HCT116 (cell line): ENCODE measurements at regions of chr10 and their contacts with region 1.

Region 1: DNA sequence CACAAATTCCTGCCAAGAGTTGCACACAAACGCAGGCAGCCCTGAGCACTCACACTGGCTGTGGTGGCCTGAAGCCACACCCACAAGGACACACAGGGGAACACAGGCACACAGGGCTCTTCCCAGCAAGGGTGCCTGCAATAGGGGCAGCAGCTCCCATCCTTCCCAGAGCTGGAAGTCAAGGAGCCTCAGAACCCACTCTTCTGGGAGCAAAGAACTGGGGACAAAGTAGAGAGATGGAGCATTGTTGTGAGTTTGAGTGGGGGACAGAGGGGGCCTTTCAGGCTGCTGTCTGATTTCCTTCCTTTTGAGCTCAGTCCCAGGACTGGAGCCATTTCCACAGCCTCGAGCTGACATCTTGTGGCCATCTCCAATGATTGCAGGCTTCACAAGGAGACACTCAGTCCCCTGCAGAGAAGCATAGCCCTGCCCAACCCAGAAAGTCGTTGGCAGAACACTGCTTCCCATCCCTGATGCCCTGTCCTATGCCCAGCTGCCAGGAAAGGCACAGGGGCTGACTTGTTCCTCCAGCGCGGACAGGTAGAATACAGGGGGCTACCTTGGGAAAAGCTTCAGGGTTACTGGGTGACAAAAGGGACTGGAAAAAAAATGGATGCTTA is 34.4 kb upstream of the SLF2 start:
- DNase-seq: peak; percentile 82
- ATAC-seq: peak; percentile 96
- H3K4me3 ChIP-seq: no peak overlapping the region
- H3K27ac ChIP-seq: no peak overlapping the region
- H3K4me1 ChIP-seq: peaks cover 8 to 27% of the 10 kb centered on the region in 2 experiments
- H3K27me3 ChIP-seq: no peaks in the 10 kb centered on the region
- CTCF ChIP-seq: peak; percentile 90 to 98 (median 92)
- POLR2A ChIP-seq: no peak
- RAD21 ChIP-seq: peak; percentile 99

Region 2: DNA sequence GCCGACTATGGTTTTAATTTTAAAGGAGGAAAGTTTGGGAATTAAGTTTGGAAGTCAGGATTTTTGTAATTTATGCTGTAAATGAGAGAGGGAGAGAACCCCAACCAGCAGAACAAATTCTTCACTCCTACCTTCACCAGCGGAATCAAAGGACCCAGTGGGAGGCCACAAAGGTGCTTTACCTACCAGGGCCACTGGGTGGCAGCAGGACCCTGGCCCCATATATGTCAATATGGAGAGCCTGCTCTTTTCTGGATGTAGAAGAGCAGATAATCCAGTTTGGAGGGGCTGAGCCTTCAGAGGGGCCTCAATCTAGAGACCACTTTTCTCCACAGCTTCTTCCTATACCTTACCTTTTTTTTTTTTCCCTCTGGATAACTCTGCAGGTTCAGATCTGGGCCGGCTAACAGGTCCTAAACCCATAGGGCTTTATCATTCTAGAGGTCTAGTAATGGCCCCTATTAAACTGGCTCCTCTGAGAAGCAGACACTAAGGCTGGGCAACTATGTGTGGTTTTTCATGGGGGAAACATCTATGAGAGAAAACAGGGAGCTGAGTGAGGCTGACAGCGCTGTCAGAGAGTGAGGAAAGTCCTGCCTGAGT is 539.9 kb before region 1 on chr10:
- CTCF ChIA-PET with region 1: interaction called, 21 read pairs
- POLR2A ChIA-PET with region 1: no interaction called
- RAD21 ChIA-PET with region 1: no interaction called
- intact Hi-C with region 1: loop called (anchors 1 kb)
- DNase-seq: peak; percentile 56
- ATAC-seq: peak; percentile 74
- H3K4me3 ChIP-seq: no peak overlapping the region
- H3K27ac ChIP-seq: no peak overlapping the region; the same call in 1 of the 2 replicates
- H3K4me1 ChIP-seq: peaks cover 3 to 10% of the 10 kb centered on the region in 2 experiments; a peak in 3 of 4 replicates
- H3K27me3 ChIP-seq: 0 out of 2 replicates have a peak, but pooled peaks cover 3% of the 10 kb centered on the region
- CTCF ChIP-seq: peak in 2 of 3 experiments; percentile 99; a peak in 4 of 6 replicates
- POLR2A ChIP-seq: no peak
- RAD21 ChIP-seq: no peak

Region 3: DNA sequence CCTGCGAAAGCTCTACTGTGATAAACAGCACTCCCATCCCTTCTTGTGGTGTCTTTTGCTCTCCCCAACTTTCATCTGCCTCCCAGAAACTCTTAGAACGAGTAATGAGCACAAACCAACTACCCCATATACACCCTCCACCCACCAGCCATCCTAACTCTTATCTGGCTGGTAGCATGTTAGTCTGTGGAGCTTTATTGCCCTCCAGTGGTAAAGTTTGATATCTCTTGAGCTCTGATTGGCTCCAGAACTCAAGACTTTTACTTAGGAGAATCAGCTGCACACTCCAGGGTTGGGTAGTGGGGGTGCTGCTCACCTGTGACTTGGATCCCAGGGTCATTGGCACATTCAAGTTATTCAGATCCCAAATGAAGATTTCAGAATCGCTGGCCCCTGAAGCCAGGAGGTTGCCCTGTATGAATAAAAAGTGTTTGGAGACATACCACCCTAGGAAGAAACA is 369.7 kb before region 1 on chr10:
- CTCF ChIA-PET with region 1: interaction called, 16 read pairs
- POLR2A ChIA-PET with region 1: no interaction called
- RAD21 ChIA-PET with region 1: interaction called, 3 to 4 read pairs
- intact Hi-C with region 1: loop called (anchors 2 kb)
- DNase-seq: peak; percentile 46
- ATAC-seq: peak; percentile 96
- H3K4me3 ChIP-seq: no peak overlapping the region
- H3K27ac ChIP-seq: no peak overlapping the region
- H3K4me1 ChIP-seq: peaks cover 0 to 4% of the 10 kb centered on the region in 2 experiments; a peak in 1 of 4 replicates
- H3K27me3 ChIP-seq: no peaks in the 10 kb centered on the region
- CTCF ChIP-seq: peak; percentile 76 to 92 (median 91)
- POLR2A ChIP-seq: no peak
- RAD21 ChIP-seq: peak; percentile 92

Region 4: DNA sequence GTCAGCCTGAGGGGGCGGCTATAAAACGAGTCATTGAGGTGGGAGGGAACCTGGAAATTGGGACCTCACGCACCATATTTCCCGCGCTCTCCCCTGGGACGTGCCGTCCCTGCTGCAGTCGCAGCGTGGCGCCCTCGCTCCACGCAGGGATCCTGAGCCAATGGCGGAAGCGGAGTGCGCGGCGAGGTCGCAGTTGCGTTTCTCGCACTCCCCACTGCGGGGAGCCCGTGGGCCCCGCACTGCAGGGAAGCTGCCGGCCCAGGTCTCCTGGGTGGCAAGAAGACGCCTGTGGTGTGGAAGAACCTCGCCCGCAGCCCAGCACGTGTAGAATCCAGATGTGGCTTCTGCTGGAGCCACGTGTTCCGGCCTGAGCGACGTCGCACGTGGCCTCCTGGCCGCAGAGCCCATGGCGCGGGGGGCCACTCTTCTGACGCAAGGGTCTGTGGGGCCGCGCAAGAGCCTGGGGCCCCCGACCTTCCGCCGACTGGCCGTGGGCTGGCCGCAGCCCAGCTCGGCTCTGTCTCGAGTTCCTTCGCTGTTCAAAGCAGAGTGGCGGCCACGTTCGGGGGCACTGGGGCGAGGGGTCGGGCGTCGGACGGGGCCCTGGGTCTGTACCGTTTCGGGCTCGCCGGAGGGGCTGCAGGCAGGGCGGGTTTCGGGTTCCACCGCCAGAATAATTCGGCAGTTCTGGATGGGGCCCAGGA is 316.2 kb before region 1 on chr10:
- CTCF ChIA-PET with region 1: interaction called, 182 read pairs
- POLR2A ChIA-PET with region 1: interaction called, 10 read pairs
- RAD21 ChIA-PET with region 1: interaction called, 22 to 36 read pairs
- intact Hi-C with region 1: loop called (anchors 1 kb)
- DNase-seq: peak; percentile 74
- ATAC-seq: peak; percentile 95
- H3K4me3 ChIP-seq: no peak overlapping the region
- H3K27ac ChIP-seq: no peak overlapping the region
- H3K4me1 ChIP-seq: peaks cover 0 to 10% of the 10 kb centered on the region in 2 experiments; a peak in 2 of 4 replicates
- H3K27me3 ChIP-seq: no peaks in the 10 kb centered on the region
- CTCF ChIP-seq: peak; percentile 99 to 100 (median 100)
- POLR2A ChIP-seq: no peak
- RAD21 ChIP-seq: peak; percentile 100

Region 5: DNA sequence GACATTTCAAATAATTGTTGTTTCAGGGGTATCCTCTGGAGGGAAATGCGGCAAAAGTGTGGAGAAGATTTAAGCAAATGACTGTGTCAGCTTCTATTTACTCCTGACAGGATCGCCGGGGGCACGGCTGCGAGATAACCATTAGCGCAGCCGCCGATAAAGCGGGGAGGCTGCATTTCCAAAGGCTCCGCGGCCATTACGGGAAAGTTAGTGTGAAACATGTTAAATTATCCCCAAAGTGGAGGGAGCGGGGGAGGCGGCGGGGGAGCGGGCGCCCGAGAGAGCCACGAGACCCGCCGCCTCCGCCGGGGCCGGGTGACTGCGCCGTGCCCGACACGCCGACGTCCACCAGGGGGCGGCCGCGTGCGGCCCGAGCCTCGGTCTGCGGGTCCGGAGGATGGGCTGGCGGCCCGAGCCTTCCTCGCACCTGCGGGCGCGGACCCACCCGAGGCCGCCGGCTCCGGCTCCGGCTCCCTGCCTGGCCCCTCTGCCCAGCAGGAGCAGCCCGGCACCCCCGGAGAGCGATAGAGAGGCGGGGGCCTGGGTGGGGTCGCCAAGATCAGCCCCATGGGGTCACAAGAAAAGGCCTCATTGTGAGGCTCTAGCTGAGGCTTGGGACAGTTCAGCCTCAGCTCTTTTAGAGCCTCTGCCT is 207.4 kb before region 1 on chr10:
- CTCF ChIA-PET with region 1: interaction called, 12 read pairs
- POLR2A ChIA-PET with region 1: interaction called, 3 read pairs
- RAD21 ChIA-PET with region 1: interaction called in 1 of 2 experiments, 10 read pairs
- intact Hi-C with region 1: loop called (anchors 1 kb)
- DNase-seq: no peak
- ATAC-seq: peak; percentile 95
- H3K4me3 ChIP-seq: peak overlapping the region; percentile 39 to 56
- H3K27ac ChIP-seq: no peak overlapping the region
- H3K4me1 ChIP-seq: peaks cover 6 to 10% of the 10 kb centered on the region in 2 experiments
- H3K27me3 ChIP-seq: peaks cover 22% of the 10 kb centered on the region
- CTCF ChIP-seq: peak; percentile 56 to 92 (median 83); a peak in 5 of 6 replicates
- POLR2A ChIP-seq: no peak
- RAD21 ChIP-seq: peak; percentile 58

Region 6: GRCh38 chr10:100888796-100889356 is 10.5 kb after region 1 on chr10:
- CTCF ChIA-PET with region 1: interaction called, 49 read pairs
- POLR2A ChIA-PET with region 1: interaction called, 4 read pairs
- RAD21 ChIA-PET with region 1: interaction called, 6 to 7 read pairs
- intact Hi-C with region 1: no loop called
- DNase-seq: peak; percentile 34
- ATAC-seq: no peak; the same call in 1 of the 2 replicates
- H3K4me3 ChIP-seq: no peak overlapping the region
- H3K27ac ChIP-seq: no peak overlapping the region
- H3K4me1 ChIP-seq: peaks cover 24 to 43% of the 10 kb centered on the region in 2 experiments
- H3K27me3 ChIP-seq: no peaks in the 10 kb centered on the region
- CTCF ChIP-seq: peak; percentile 53 to 70 (median 64); a peak in 5 of 6 replicates
- POLR2A ChIP-seq: no peak
- RAD21 ChIP-seq: peak; percentile 60